ENCODE measurements at regions of chr1 and their contacts with region 1.

Region 1: GRCh38 chr1:115463363-115463746 is 125.3 kb upstream of the NGF start:
- H3K4me3 ChIP-seq: no peak overlapping the region
- H3K27ac ChIP-seq: no peak overlapping the region
- H3K4me1 ChIP-seq: peaks cover 7% of the 10 kb centered on the region
- CTCF ChIP-seq: peak; percentile 64

Region 2: GRCh38 chr1:115239148-115239820 is 224.1 kb before region 1 on chr1:
- CTCF ChIA-PET with region 1: no interaction called
- POLR2A ChIA-PET with region 1: no interaction called
- H3K4me3 ChIP-seq: no peak overlapping the region
- H3K27ac ChIP-seq: no peak overlapping the region
- H3K4me1 ChIP-seq: no peaks in the 10 kb centered on the region
- CTCF ChIP-seq: no peak

Region 3: GRCh38 chr1:115501476-115501875 is 38.1 kb after region 1 on chr1:
- CTCF ChIA-PET with region 1: interaction called, 10 read pairs
- POLR2A ChIA-PET with region 1: no interaction called
- H3K4me3 ChIP-seq: no peak overlapping the region
- H3K27ac ChIP-seq: no peak overlapping the region
- H3K4me1 ChIP-seq: no peaks in the 10 kb centered on the region
- CTCF ChIP-seq: no peak

Region 4: GRCh38 chr1:115632251-115633026 is 169.1 kb after region 1 on chr1:
- CTCF ChIA-PET with region 1: no interaction called
- POLR2A ChIA-PET with region 1: no interaction called
- H3K4me3 ChIP-seq: no peak overlapping the region
- H3K27ac ChIP-seq: no peak overlapping the region
- H3K4me1 ChIP-seq: no peaks in the 10 kb centered on the region
- CTCF ChIP-seq: no peak